Psoas muscle (tissue), 8 donors: ENCODE measurements at regions of chr14 and their contacts with region 1.

Region 1: DNA sequence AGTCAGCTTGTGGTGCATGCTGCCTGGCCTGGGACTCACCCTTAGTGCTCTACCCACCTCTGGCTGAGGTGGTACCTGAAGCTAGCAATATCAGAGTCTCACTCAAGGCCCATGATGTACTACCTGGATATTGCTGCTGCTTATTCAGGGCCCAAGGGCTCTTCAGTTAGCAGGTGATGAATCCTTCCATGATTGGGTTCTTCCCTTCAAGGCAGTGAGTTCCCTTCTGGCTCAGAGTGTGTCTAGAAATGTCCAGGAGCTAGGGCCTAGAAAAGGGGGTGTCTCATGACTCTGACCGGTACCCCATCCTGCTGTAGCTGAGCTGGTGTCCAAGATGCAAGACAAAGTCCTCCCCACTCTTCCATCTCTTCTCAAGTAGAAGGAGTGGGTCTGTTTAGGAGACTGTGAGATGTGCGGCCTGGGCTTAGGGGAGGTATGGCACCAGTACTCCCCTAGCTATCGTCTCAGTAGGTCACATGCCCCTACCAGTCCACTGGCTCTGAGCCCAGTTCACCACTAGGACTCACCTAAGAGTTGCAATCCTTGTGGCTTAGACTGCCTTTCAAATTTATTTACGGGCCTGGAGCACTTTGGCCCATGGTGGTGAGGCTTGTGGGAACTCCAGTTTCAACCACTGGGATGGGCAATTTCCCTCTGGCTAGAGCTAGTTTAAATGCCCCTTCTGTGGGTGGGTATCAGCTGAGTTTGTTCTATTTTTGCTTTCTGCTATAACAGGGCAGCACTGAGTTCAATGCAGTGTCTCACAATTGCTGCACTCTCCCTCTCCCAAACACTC is 12.2 kb downstream of the PRORP start:
- DNase-seq: no peak
- ATAC-seq: no peak
- H3K4me3 ChIP-seq: no peak overlapping the region
- H3K27ac ChIP-seq: no peak overlapping the region
- H3K4me1 ChIP-seq: no peaks in the 10 kb centered on the region
- H3K27me3 ChIP-seq: no peaks in the 10 kb centered on the region
- CTCF ChIP-seq: no peak

Region 2: GRCh38 chr14:35222872-35223466 is 88.4 kb after region 1 on chr14:
- intact Hi-C with region 1: loop called in 1 of 2 experiments (anchors 5 kb)
- DNase-seq: no peak
- ATAC-seq: peak in 1 of 4 donors; percentile 35
- H3K4me3 ChIP-seq: no peak overlapping the region
- H3K27ac ChIP-seq: no peak overlapping the region
- H3K4me1 ChIP-seq: peaks cover 7% of the 10 kb centered on the region
- H3K27me3 ChIP-seq: no peaks in the 10 kb centered on the region
- CTCF ChIP-seq: no peak